ENCODE measurements at regions of chr4 and their contacts with region 1.

Region 1: DNA sequence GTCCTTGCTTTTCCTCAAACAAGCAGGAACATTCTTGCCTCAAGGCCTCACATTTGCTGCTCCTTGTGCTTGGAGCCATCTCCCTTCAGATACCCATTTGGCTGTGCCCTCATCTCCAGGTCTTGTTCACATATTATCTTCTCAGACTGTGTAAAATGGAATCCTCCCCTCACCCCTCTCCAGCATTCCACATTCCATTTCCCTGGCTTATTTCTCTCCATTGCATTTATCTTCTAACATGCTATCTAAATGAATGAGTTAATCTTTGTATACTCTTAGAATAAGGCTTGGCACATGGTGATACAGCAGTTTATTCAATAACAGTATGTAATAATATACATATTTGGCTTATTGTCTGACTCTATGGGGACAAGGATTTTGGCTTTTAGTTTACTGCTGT is 8.8 kb upstream of the GALNT7 start:
- DNase-seq: peak; percentile 25
- ATAC-seq: peak; percentile 87
- H3K4me3 ChIP-seq: no peak overlapping the region
- H3K27ac ChIP-seq: no peak overlapping the region; the same call in 1 of the 2 replicates
- H3K4me1 ChIP-seq: peaks cover 4% of the 10 kb centered on the region; the same call in 1 of the 2 replicates
- H3K27me3 ChIP-seq: no peaks in the 10 kb centered on the region
- CTCF ChIP-seq: no peak
- POLR2A ChIP-seq: no peak
- RAD21 ChIP-seq: no peak

Region 2: GRCh38 chr4:173181769-173182354 is 22.1 kb after region 1 on chr4:
- CTCF ChIA-PET with region 1: no interaction called
- POLR2A ChIA-PET with region 1: no interaction called
- dilution Hi-C with region 1: no loop called
- in situ Hi-C with region 1: no loop called
- intact Hi-C with region 1: loop called (anchors 1 kb)
- DNase-seq: peak; percentile 80
- ATAC-seq: peak; percentile 76
- H3K4me3 ChIP-seq: no peak overlapping the region
- H3K27ac ChIP-seq: no peak overlapping the region
- H3K4me1 ChIP-seq: peaks cover 2% of the 10 kb centered on the region; the same call in 1 of the 2 replicates
- H3K27me3 ChIP-seq: no peaks in the 10 kb centered on the region
- CTCF ChIP-seq: no peak
- POLR2A ChIP-seq: no peak
- RAD21 ChIP-seq: no peak